ENCODE measurements at regions of chr3 and their contacts with region 1.

Region 1: DNA sequence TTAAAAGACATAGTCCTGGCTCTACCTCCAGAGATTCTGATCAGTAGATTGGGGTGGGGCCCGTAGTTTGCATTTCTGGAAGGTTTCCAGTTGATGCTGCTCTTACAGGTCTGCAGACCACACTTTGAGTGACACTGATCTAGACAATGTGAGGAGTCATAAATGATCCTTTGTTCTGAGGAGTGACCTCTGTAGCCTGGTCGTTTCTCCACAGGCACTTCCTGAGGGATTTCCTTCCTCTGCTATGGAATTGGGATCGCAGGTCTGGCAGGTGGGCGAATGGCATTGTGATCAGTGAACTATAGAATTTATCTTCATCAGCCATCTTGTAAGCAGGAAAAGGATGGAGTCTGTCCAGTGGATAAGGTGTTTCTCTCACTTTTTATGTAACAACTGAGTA is 5.5 kb downstream of the GFM1 start:
- DNase-seq: no peak
- ATAC-seq: no peak
- H3K4me3 ChIP-seq: no peak overlapping the region
- H3K4me3 Mint-ChIP-seq: no peak overlapping the region
- H3K27ac ChIP-seq: no peak overlapping the region
- H3K27ac Mint-ChIP-seq: peak overlapping the region; percentile 5 to 39
- H3K4me1 ChIP-seq: peaks cover 0 to 4% of the 10 kb centered on the region in 2 experiments
- H3K4me1 Mint-ChIP-seq: peaks cover 34 to 44% (median 38%) of the 10 kb centered on the region in 3 donors
- H3K27me3 ChIP-seq: no peaks in the 10 kb centered on the region
- H3K27me3 Mint-ChIP-seq: no peaks in the 10 kb centered on the region

Region 2: DNA sequence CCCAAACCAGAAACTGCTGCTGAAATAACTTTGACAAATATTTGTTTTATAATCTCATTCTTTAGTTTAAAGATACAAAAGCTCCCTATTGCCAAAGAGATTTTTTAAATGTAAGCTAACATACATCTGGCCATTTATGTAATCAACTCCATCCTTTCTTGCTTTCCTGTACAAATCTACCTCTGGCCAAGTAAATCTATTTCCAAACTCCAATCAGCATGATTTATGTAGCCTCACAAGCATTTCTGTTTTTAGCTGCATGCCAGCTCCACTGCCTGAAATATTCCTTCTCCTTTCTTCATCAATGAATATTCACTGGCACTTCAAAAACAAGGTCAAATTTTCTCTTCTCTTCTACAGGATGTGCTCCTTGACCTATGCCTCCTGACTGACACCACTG is 623.6 kb before region 1 on chr3:
- CTCF ChIA-PET with region 1: no interaction called
- POLR2A ChIA-PET with region 1: no interaction called
- DNase-seq: no peak
- ATAC-seq: no peak
- H3K4me3 ChIP-seq: no peak overlapping the region
- H3K4me3 Mint-ChIP-seq: no peak overlapping the region
- H3K27ac ChIP-seq: no peak overlapping the region
- H3K27ac Mint-ChIP-seq: no peak overlapping the region
- H3K4me1 ChIP-seq: no peaks in the 10 kb centered on the region
- H3K4me1 Mint-ChIP-seq: no peaks in the 10 kb centered on the region
- H3K27me3 ChIP-seq: no peaks in the 10 kb centered on the region
- H3K27me3 Mint-ChIP-seq: no peaks in the 10 kb centered on the region

Region 3: DNA sequence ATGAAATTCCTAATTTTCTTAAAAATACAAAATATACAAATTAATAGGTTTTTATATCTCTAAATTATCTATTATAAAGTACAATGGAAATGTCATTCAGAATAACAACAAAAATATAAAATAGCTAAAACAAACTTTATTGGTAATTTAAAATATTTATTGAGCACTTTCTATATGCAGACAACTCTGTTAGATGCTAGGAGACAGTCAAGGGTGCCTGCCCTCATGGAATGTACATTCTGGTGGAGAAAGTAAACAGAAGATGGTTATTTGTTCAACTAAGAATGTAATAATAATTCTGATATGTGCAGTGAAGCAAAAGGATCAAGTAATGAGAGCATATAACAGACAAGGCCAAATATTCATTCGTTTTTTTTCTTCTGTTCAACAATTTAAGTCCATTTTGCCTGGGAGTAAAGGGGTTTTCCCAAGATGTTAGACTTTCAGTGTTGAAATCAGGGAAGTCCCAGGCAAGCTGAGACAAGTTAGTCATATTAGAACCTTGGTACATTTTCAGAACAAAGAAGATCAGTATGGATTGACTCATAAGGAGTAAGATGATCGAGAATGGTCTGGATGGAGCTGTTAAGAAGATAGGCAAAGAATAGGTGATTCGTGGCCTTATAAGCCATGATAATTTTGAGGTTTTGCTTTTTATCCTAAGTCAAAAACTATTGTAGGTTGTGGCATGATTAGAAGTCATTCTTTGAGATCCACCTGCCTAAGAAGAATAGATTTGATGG is 229.0 kb before region 1 on chr3:
- CTCF ChIA-PET with region 1: no interaction called
- POLR2A ChIA-PET with region 1: interaction called in 1 of 2 experiments, 14 read pairs
- DNase-seq: no peak
- ATAC-seq: no peak
- H3K4me3 ChIP-seq: no peak overlapping the region
- H3K4me3 Mint-ChIP-seq: no peak overlapping the region
- H3K27ac ChIP-seq: no peak overlapping the region
- H3K27ac Mint-ChIP-seq: no peak overlapping the region
- H3K4me1 ChIP-seq: no peaks in the 10 kb centered on the region
- H3K4me1 Mint-ChIP-seq: peaks cover 0 to 2% (median 0%) of the 10 kb centered on the region in 3 donors
- H3K27me3 ChIP-seq: no peaks in the 10 kb centered on the region
- H3K27me3 Mint-ChIP-seq: no peaks in the 10 kb centered on the region

Region 4: GRCh38 chr3:158912188-158912587 is 262.4 kb after region 1 on chr3:
- CTCF ChIA-PET with region 1: no interaction called
- POLR2A ChIA-PET with region 1: no interaction called
- DNase-seq: no peak
- ATAC-seq: no peak
- H3K4me3 ChIP-seq: no peak overlapping the region
- H3K4me3 Mint-ChIP-seq: no peak overlapping the region
- H3K27ac ChIP-seq: no peak overlapping the region
- H3K27ac Mint-ChIP-seq: no peak overlapping the region
- H3K4me1 ChIP-seq: no peaks in the 10 kb centered on the region
- H3K4me1 Mint-ChIP-seq: no peaks in the 10 kb centered on the region
- H3K27me3 ChIP-seq: no peaks in the 10 kb centered on the region
- H3K27me3 Mint-ChIP-seq: peaks cover 2 to 5% of the 10 kb centered on the region in 2 donors